Dorsolateral prefrontal cortex (tissue), 120 donors: ENCODE measurements at regions of chr17 and their contacts with region 1.

Region 1: DNA sequence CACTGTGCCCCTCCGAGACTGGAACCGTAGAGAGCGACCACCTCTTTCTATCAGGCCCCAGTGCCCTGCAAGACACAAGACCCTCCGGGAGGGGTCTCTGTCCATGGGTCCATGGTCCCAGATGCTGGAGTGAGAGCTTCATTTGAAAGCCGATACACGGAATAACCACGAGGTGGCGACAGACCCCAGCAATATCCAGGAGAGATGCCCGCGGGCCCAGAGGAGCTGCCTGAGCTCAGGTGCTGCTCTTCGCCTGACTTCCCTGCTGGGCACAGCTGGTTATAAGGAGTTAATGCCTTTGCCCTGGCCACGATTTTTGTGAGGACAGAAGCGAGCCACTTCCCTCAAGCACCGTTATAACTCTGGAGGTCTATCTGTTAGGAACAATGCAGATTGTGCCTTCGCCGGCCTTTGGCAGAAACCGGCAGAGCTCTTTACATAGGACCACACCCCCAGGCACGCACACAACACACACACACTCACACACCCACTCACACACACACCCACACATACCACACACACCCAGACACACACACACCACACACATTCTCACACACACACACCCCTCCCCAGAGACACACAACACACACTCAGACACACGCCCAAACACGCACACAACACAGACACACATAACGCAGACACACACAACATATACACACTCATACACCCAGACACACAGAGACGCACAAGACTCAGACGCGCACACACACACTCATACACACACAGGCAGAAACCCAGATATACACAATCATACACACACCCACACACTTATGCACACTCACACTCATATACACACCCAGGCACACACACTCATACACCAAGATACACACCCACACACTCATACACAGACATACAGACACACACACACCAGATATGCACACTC is 436.4 kb downstream of the SOX9 start:
- DNase-seq: peak; percentile 52 to 81 (median 67)
- H3K4me3 ChIP-seq: no peak overlapping the region
- H3K27ac ChIP-seq: no peak overlapping the region
- H3K27me3 ChIP-seq: peaks cover 0 to 24% (median 0%) of the 10 kb centered on the region in 45 donors
- CTCF ChIP-seq: peak; percentile 60 to 92 (median 85)

Region 2: DNA sequence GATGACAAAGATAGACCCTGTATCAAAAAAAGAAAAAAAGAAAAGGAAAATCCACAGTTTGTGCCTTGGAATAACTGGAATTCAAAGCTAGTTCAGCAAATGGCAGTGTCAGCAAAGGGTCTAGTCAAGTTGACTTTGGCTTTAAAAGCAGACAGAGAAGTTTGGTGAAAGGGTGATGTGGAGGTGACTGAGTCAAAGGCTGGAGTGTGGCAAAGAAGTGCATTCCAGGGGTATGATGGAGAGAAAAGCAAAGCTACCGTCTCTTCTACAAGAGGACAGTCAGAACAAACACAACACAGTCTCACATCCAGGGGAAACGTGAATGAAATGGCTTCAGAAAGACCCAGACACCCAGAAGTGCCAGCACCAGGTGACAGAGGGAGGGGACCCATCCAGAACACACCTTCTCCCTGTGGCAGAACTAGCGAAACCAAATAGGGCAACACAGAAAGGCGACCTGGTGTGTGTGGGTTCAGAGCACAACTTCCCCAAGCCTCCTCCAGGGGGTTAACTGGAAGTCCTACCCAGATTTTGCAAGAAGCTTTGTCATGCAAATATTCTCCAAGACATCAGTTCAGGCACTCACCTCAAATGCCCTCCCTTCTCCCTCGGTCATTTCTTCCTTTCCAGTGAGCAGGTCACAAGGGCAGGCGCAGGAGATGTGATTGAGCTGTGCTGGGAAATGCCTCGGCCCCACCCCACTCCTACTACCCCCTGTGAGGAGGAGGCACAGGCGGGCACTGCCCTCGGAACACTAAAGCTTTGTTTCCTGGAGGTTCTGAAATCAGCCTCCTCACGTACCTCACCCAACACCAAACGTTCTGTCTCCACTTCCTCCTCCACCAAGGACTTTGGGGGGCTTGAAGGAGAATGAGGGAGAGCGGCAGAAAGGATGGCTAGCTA is 45.6 kb after region 1 on chr17:
- intact Hi-C with region 1: no loop called
- DNase-seq: no peak
- H3K4me3 ChIP-seq: no peak overlapping the region
- H3K27ac ChIP-seq: no peak overlapping the region
- H3K27me3 ChIP-seq: peaks cover 0 to 42% (median 9%) of the 10 kb centered on the region in 45 donors
- CTCF ChIP-seq: no peak

Region 3: GRCh38 chr17:72699545-72699944 is 142.4 kb after region 1 on chr17:
- intact Hi-C with region 1: loop called in 1 of 2 experiments (anchors 10 kb)
- DNase-seq: peak in 9 of 10 donors; percentile 31 to 86 (median 64)
- H3K4me3 ChIP-seq: no peak overlapping the region
- H3K27ac ChIP-seq: peak overlapping the region in 22 of 59 donors; percentile 18 to 68 (median 40)
- H3K27me3 ChIP-seq: no peaks in the 10 kb centered on the region
- CTCF ChIP-seq: no peak

Region 4: DNA sequence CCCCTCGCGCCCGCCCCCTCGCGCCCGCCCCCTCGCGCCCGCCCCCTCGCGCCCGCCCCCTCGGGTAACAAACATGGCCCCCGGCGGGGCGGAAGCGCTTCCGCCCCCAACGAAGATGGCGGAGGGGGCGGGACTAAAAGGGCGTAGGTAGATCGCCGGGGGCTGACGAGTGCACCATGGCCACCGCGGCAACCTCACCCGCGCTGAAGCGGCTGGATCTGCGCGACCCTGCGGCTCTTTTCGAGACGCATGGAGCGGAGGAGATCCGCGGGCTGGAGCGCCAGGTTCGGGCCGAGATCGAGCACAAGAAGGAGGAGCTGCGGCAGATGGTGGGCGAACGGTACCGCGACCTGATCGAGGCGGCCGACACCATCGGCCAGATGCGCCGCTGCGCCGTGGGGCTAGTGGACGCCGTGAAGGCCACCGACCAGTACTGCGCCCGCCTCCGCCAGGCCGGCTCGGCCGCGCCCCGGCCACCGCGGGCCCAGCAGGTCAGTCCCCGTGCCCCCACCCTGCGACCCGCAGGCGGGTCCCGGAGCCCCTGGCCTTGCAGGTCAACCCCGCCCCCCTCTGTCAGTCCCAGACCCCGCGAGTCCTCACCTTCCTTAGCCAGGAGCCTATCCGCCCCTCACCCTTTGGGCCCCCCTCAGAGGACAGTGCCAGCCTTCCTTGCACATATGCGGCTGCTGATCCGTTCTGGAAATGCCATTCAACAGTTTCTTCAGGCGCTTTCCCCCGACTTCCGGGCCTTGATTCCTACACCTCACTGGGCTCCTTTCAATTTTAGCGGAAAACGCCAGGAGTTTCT is 635.9 kb after region 1 on chr17 and contains the start of gene COG1:
- intact Hi-C with region 1: loop called (anchors 2 to 10 kb)
- DNase-seq: peak; percentile 51 to 85 (median 74)
- H3K4me3 ChIP-seq: peak within 1 kb of the TSS; percentile 73 to 100 (median 95)
- H3K27ac ChIP-seq: peak within 1 kb of the TSS; percentile 47 to 94 (median 86)
- H3K27me3 ChIP-seq: no peaks in the 10 kb centered on the region
- CTCF ChIP-seq: peak in 6 of 56 donors; percentile 3 to 39 (median 11)
- total RNA-seq, gene COG1: 48.4 to 137 (median 85.4) TPM

Region 5: GRCh38 chr17:73371285-73371684 is 814.1 kb after region 1 on chr17:
- intact Hi-C with region 1: loop called in 1 of 2 experiments (anchors 5 kb)
- DNase-seq: no peak
- H3K4me3 ChIP-seq: no peak overlapping the region
- H3K27ac ChIP-seq: no peak overlapping the region
- H3K27me3 ChIP-seq: no peaks in the 10 kb centered on the region
- CTCF ChIP-seq: no peak